ENCODE measurements at regions of chr19 and their contacts with region 1.

Region 1: GRCh38 chr19:35899547-35900214 is 659 bp downstream of the NFKBID start:
- DNase-seq: peak; percentile 77 to 96 (median 89)
- H3K4me3 ChIP-seq: peak overlapping the region; percentile 80 to 99 (median 97)
- H3K4me3 Mint-ChIP-seq: peak overlapping the region; percentile 97 to 98
- H3K27ac ChIP-seq: peak overlapping the region; percentile 95 to 98
- H3K27ac Mint-ChIP-seq: peak overlapping the region; percentile 96 to 100 (median 100)
- H3K4me1 ChIP-seq: peaks cover 54 to 65% of the 10 kb centered on the region in 2 donors
- H3K4me1 Mint-ChIP-seq: peaks cover 54% of the 10 kb centered on the region
- H3K27me3 ChIP-seq: no peaks in the 10 kb centered on the region
- H3K27me3 Mint-ChIP-seq: peaks cover 0 to 10% (median 0%) of the 10 kb centered on the region in 3 donors
- CTCF ChIP-seq: no peak

Region 2: DNA sequence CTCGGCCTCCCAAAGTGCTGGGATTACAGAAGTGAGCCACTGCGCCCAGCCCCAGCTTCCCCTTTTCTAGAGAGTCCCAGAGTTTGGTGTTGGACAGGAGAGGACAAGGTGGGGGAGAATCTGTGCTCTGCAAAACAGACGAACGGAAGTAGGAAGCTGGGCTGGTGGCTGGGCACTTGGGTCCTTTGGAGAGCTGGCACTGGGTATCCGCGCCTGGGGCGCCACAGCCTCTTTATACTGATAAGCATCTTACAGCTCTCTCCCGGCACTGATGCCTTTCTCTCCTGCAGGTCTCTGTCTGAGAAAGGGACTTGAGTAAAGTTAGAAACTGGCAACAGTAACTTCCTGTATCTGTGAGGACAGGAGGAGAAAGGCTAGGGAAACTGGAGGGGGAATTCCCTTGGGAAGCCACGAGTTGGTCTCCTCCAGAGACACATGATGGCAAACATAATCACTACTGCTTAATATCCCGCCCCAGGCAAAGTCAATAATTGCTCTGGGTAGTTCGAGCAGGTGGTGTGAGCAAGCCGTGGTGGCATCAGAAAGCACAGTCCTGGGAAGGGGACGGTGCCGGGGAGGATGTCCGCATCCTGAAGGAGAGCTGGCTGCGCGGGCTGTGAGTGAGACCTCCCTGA is 450.5 kb before region 1 on chr19:
- intact Hi-C with region 1: loop called in 1 of 2 experiments (anchors 10 kb)
- DNase-seq: peak; percentile 77 to 87 (median 80)
- H3K4me3 ChIP-seq: peak overlapping the region; percentile 4 to 73 (median 32)
- H3K4me3 Mint-ChIP-seq: peak overlapping the region; percentile 72 to 79
- H3K27ac ChIP-seq: peak overlapping the region; percentile 95 to 99
- H3K27ac Mint-ChIP-seq: peak overlapping the region; percentile 98 to 100 (median 100)
- H3K4me1 ChIP-seq: peaks cover 74 to 81% of the 10 kb centered on the region in 2 donors
- H3K4me1 Mint-ChIP-seq: peaks cover 77% of the 10 kb centered on the region
- H3K27me3 ChIP-seq: no peaks in the 10 kb centered on the region
- H3K27me3 Mint-ChIP-seq: peaks cover 0 to 16% (median 7%) of the 10 kb centered on the region in 3 donors
- CTCF ChIP-seq: no peak

Region 3: GRCh38 chr19:35882114-35882832 is 17.4 kb before region 1 on chr19:
- intact Hi-C with region 1: loop called in 1 of 2 experiments (anchors 2 kb)
- DNase-seq: peak; percentile 59 to 66 (median 63)
- H3K4me3 ChIP-seq: no peak overlapping the region
- H3K4me3 Mint-ChIP-seq: no peak overlapping the region
- H3K27ac ChIP-seq: no peak overlapping the region
- H3K27ac Mint-ChIP-seq: peak overlapping the region in 1 of 7 donors; percentile 68
- H3K4me1 ChIP-seq: peaks cover 0 to 5% of the 10 kb centered on the region in 2 donors
- H3K4me1 Mint-ChIP-seq: peaks cover 12% of the 10 kb centered on the region
- H3K27me3 ChIP-seq: peaks cover 0 to 16% of the 10 kb centered on the region in 2 donors
- H3K27me3 Mint-ChIP-seq: peaks cover 17 to 24% (median 18%) of the 10 kb centered on the region in 3 donors
- CTCF ChIP-seq: peak; percentile 76

Region 4: DNA sequence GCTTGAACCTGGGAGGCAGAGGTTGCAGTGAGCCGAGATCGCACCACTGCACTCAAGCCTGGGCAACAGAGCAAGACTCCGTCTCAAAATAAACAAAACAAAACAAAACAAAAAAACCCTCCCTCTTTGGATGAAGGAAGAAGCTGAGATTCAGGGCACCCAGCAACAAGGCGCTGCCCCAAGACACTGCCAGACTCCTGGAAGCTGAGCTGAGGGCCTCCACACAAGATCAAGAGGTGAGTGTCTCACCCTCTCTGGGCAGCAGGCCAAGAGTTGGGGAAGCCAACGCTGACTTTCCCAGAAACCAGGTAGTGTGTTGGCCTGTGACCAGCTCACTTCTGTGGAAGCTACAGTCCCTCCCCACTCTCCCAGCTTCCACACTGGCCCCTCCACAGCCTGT is 12.1 kb after region 1 on chr19:
- intact Hi-C with region 1: loop called in 1 of 2 experiments (anchors 1 kb)
- DNase-seq: peak in 2 of 3 donors; percentile 26 to 53
- H3K4me3 ChIP-seq: no peak overlapping the region
- H3K4me3 Mint-ChIP-seq: no peak overlapping the region
- H3K27ac ChIP-seq: peak overlapping the region; percentile 59 to 73
- H3K27ac Mint-ChIP-seq: peak overlapping the region; percentile 55 to 98 (median 90)
- H3K4me1 ChIP-seq: peaks cover 77 to 96% of the 10 kb centered on the region in 2 donors
- H3K4me1 Mint-ChIP-seq: peaks cover 72% of the 10 kb centered on the region
- H3K27me3 ChIP-seq: no peaks in the 10 kb centered on the region
- H3K27me3 Mint-ChIP-seq: peaks cover 0 to 5% (median 0%) of the 10 kb centered on the region in 3 donors
- CTCF ChIP-seq: no peak

Region 5: GRCh38 chr19:35963514-35963913 is 63.8 kb after region 1 on chr19:
- intact Hi-C with region 1: no loop called
- DNase-seq: no peak
- H3K4me3 ChIP-seq: no peak overlapping the region
- H3K4me3 Mint-ChIP-seq: no peak overlapping the region
- H3K27ac ChIP-seq: no peak overlapping the region
- H3K27ac Mint-ChIP-seq: no peak overlapping the region
- H3K4me1 ChIP-seq: peaks cover 0 to 9% of the 10 kb centered on the region in 2 donors
- H3K4me1 Mint-ChIP-seq: peaks cover 3% of the 10 kb centered on the region
- H3K27me3 ChIP-seq: peaks cover 17 to 29% of the 10 kb centered on the region in 2 donors
- H3K27me3 Mint-ChIP-seq: peaks cover 25 to 47% (median 37%) of the 10 kb centered on the region in 3 donors
- CTCF ChIP-seq: no peak